CD4-positive, alpha-beta T cell (primary cell): ENCODE measurements at regions of chr13 and their contacts with region 1.

Region 1: GRCh38 chr13:48769107-48769704 is 115.5 kb downstream of the CYSLTR2 start:
- DNase-seq: peak; percentile 46 to 91 (median 78)
- ATAC-seq: peak; percentile 100
- H3K4me3 ChIP-seq: no peak overlapping the region
- H3K4me3 Mint-ChIP-seq: no peak overlapping the region
- H3K27ac ChIP-seq: no peak overlapping the region
- H3K27ac Mint-ChIP-seq: no peak overlapping the region
- H3K4me1 ChIP-seq: no peaks in the 10 kb centered on the region
- H3K4me1 Mint-ChIP-seq: no peaks in the 10 kb centered on the region
- H3K27me3 ChIP-seq: no peaks in the 10 kb centered on the region
- H3K27me3 Mint-ChIP-seq: peaks cover 6% of the 10 kb centered on the region
- CTCF ChIP-seq: peak; percentile 100

Region 2: DNA sequence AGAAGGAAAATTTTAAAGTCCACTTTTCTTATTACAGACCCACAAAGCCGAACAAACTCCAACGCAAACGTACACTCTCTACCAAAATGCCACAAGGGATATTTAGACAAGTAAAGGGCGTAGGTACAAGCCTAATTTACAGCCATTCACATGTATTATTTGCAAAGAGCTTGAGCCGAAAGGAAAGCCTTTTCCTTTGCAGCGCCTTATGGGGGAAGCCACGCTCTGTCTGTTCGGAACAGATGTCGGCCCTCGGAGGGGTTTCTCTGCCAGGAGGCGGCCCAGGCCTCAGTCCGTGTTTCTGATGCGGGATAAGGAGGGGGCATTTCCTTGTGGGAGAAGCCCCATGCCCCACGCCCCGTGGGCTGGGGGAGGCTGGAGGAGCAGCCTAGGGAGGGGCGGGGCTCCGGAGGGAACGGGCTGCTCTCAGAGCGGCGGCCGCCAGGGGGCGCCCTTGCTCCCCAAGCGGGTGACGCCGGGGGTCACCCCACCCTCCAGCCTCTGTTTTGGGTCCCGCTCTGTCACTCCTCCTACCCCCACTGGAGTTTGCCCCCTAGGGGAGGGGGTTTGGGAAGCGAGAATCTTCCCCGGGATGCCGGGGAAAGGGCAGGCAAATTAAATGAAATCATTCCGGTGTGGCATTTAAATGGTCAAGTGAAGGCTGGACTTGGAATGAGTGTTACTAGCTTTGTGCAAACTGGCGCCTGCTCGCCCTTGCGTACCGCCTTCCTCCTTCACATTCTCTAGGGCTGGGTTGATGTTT is 1875.2 kb before region 1 on chr13:
- CTCF ChIA-PET with region 1: no interaction called
- POLR2A ChIA-PET with region 1: no interaction called
- intact Hi-C with region 1: loop called (anchors 5 to 10 kb)
- DNase-seq: peak; percentile 25 to 77 (median 50)
- ATAC-seq: peak; percentile 89
- H3K4me3 ChIP-seq: peak overlapping the region; percentile 54
- H3K4me3 Mint-ChIP-seq: peak overlapping the region; percentile 75
- H3K27ac ChIP-seq: no peak overlapping the region
- H3K27ac Mint-ChIP-seq: no peak overlapping the region
- H3K4me1 ChIP-seq: peaks cover 7% of the 10 kb centered on the region
- H3K4me1 Mint-ChIP-seq: peaks cover 38% of the 10 kb centered on the region
- H3K27me3 ChIP-seq: peaks cover 8 to 34% of the 10 kb centered on the region in 2 experiments
- H3K27me3 Mint-ChIP-seq: peaks cover 86% of the 10 kb centered on the region
- CTCF ChIP-seq: peak; percentile 86

Region 3: DNA sequence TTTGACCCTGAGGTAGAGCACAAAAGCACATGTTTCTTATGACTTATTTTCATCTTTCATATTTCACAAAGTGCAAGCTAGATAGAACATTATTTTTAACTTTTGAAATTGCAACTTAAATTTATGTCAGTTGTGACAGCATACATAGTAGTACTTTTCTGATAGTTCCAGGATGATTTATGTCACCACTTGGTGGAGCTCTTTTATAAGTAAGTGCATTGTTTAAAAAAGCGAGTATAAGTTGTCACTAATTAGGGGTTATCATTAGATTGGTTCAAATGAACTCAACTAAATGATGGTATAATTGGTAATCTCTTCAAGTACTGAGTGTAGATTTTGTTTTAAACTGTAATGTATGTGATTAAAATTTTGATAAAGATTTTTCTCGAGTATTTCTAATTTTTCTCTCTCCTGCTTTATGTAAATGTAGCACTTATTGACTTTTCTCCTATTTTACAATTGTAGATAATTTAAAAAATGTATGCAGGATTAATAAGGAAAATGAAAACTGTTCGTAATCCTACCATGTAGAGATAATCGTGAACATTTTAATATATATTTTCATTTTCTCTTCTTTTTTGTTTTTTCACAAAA is 434.6 kb before region 1 on chr13:
- CTCF ChIA-PET with region 1: interaction called, 11 read pairs
- POLR2A ChIA-PET with region 1: no interaction called
- intact Hi-C with region 1: loop called (anchors 1 kb)
- DNase-seq: peak in 3 of 14 experiments; percentile 68 to 73 (median 71)
- ATAC-seq: peak; percentile 71
- H3K4me3 ChIP-seq: no peak overlapping the region
- H3K4me3 Mint-ChIP-seq: no peak overlapping the region
- H3K27ac ChIP-seq: no peak overlapping the region
- H3K27ac Mint-ChIP-seq: no peak overlapping the region
- H3K4me1 ChIP-seq: no peaks in the 10 kb centered on the region
- H3K4me1 Mint-ChIP-seq: peaks cover 13% of the 10 kb centered on the region
- H3K27me3 ChIP-seq: no peaks in the 10 kb centered on the region
- H3K27me3 Mint-ChIP-seq: no peaks in the 10 kb centered on the region
- CTCF ChIP-seq: peak; percentile 95

Region 4: GRCh38 chr13:48595431-48596429 is 173.5 kb before region 1 on chr13:
- CTCF ChIA-PET with region 1: interaction called, 21 read pairs
- POLR2A ChIA-PET with region 1: interaction called, 3 read pairs
- intact Hi-C with region 1: loop called (anchors 1 kb)
- DNase-seq: peak; percentile 38 to 87 (median 50)
- ATAC-seq: peak; percentile 95
- H3K4me3 ChIP-seq: no peak overlapping the region
- H3K4me3 Mint-ChIP-seq: no peak overlapping the region
- H3K27ac ChIP-seq: no peak overlapping the region
- H3K27ac Mint-ChIP-seq: no peak overlapping the region
- H3K4me1 ChIP-seq: no peaks in the 10 kb centered on the region
- H3K4me1 Mint-ChIP-seq: no peaks in the 10 kb centered on the region
- H3K27me3 ChIP-seq: no peaks in the 10 kb centered on the region
- H3K27me3 Mint-ChIP-seq: no peaks in the 10 kb centered on the region
- CTCF ChIP-seq: peak; percentile 68

Region 5: DNA sequence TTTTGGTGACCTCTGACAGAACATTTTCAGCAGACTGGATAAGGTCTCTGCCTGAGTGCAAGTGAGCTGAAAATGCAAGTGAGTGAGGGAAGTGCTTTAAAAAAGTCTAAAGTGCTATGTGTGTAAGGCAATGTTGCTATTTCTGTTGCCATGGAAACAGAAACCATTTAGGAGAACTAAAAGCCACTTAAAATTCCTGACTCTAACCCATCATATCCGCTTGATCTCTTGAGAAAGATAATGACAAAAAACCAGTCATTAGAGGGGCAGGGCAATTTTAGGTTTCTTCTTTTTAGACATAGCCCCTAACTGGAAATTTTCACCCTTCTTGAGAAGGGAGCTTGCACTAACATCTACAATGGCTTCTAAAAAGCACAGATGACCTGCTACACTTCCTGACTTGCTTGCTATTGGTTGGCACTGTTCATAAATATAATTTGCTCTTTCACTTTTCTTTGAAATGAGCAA is 115.7 kb before region 1 on chr13 and contains the start of gene CYSLTR2:
- CTCF ChIA-PET with region 1: interaction called, 11 read pairs
- POLR2A ChIA-PET with region 1: no interaction called
- intact Hi-C with region 1: no loop called
- DNase-seq: peak in 9 of 14 experiments; percentile 9 to 92 (median 17)
- ATAC-seq: peak; percentile 89
- H3K4me3 ChIP-seq: peak within 1 kb of the TSS; percentile 51
- H3K4me3 Mint-ChIP-seq: peak within 1 kb of the TSS; percentile 84
- H3K27ac ChIP-seq: peak within 1 kb of the TSS; percentile 75 to 93
- H3K27ac Mint-ChIP-seq: peak within 1 kb of the TSS; percentile 85
- H3K4me1 ChIP-seq: peaks cover 19% of the 10 kb centered on the region
- H3K4me1 Mint-ChIP-seq: peaks cover 46% of the 10 kb centered on the region
- H3K27me3 ChIP-seq: no peaks in the 10 kb centered on the region
- H3K27me3 Mint-ChIP-seq: no peaks in the 10 kb centered on the region
- CTCF ChIP-seq: no peak
- total RNA-seq, gene CYSLTR2: 2.4 to 2.7 TPM

Region 6: DNA sequence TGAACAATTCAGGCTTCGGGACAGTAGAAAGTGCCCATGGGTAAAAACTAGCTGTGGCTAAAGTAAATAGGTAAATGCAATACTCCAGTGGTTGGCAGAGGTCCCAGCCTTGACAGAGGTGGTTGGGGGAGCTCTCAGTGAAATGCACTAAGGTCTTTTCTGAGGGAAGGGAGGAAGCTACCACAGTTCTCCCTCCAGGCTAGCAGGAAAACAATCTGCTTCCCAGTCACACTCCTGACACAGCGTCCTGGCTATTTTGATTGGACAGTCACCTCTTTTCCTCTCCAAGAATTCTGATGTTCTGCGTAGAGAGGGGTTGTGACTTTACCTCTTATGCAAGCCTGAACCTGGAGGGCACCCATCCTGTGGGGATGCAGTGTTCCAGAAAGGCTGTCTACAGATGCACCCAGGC is 13.2 kb after region 1 on chr13:
- CTCF ChIA-PET with region 1: interaction called, 10 read pairs
- POLR2A ChIA-PET with region 1: no interaction called
- intact Hi-C with region 1: no loop called
- DNase-seq: no peak
- ATAC-seq: no peak
- H3K4me3 ChIP-seq: no peak overlapping the region
- H3K4me3 Mint-ChIP-seq: no peak overlapping the region
- H3K27ac ChIP-seq: no peak overlapping the region
- H3K27ac Mint-ChIP-seq: no peak overlapping the region
- H3K4me1 ChIP-seq: peaks cover 3% of the 10 kb centered on the region
- H3K4me1 Mint-ChIP-seq: no peaks in the 10 kb centered on the region
- H3K27me3 ChIP-seq: no peaks in the 10 kb centered on the region
- H3K27me3 Mint-ChIP-seq: peaks cover 4% of the 10 kb centered on the region
- CTCF ChIP-seq: no peak